Naive thymus-derived CD4-positive, alpha-beta T cell (primary cell): ENCODE measurements at regions of chr20 and their contacts with region 1.

Region 1: GRCh38 chr20:17569616-17570346 is at the start of gene DSTN:
- DNase-seq: peak; percentile 83 to 91 (median 89)
- ATAC-seq: peak; percentile 95
- H3K4me3 ChIP-seq: peak within 1 kb of the TSS; percentile 94
- H3K4me3 Mint-ChIP-seq: peak within 1 kb of the TSS; percentile 82 to 97 (median 95)
- H3K27ac ChIP-seq: peak within 1 kb of the TSS; percentile 85
- H3K27ac Mint-ChIP-seq: peak within 1 kb of the TSS; percentile 80 to 96 (median 91)
- H3K4me1 ChIP-seq: peaks cover 5 to 11% of the 10 kb centered on the region in 2 donors
- H3K4me1 Mint-ChIP-seq: peaks cover 17 to 44% (median 31%) of the 10 kb centered on the region in 7 donors
- H3K27me3 ChIP-seq: no peaks in the 10 kb centered on the region
- H3K27me3 Mint-ChIP-seq: peaks cover 0 to 14% (median 0%) of the 10 kb centered on the region in 5 donors
- total RNA-seq, gene DSTN: 28.7 to 63.6 (median 33.9) TPM

Region 2: GRCh38 chr20:17460119-17460518 is 109.7 kb before region 1 on chr20:
- CTCF ChIA-PET with region 1: no interaction called
- POLR2A ChIA-PET with region 1: no interaction called
- intact Hi-C with region 1: no loop called
- DNase-seq: no peak
- ATAC-seq: no peak
- H3K4me3 ChIP-seq: no peak overlapping the region
- H3K4me3 Mint-ChIP-seq: no peak overlapping the region
- H3K27ac ChIP-seq: no peak overlapping the region
- H3K27ac Mint-ChIP-seq: no peak overlapping the region
- H3K4me1 ChIP-seq: no peaks in the 10 kb centered on the region
- H3K4me1 Mint-ChIP-seq: peaks cover 0 to 6% (median 0%) of the 10 kb centered on the region in 7 donors
- H3K27me3 ChIP-seq: no peaks in the 10 kb centered on the region
- H3K27me3 Mint-ChIP-seq: peaks cover 11 to 30% (median 16%) of the 10 kb centered on the region in 5 donors

Region 3: GRCh38 chr20:17536944-17537444 is 32.8 kb before region 1 on chr20:
- CTCF ChIA-PET with region 1: interaction called, 4 read pairs
- POLR2A ChIA-PET with region 1: no interaction called
- intact Hi-C with region 1: loop called in 1 of 2 experiments (anchors 2 kb)
- DNase-seq: peak; percentile 22 to 73 (median 65)
- ATAC-seq: peak; percentile 98
- H3K4me3 ChIP-seq: no peak overlapping the region
- H3K4me3 Mint-ChIP-seq: no peak overlapping the region
- H3K27ac ChIP-seq: no peak overlapping the region
- H3K27ac Mint-ChIP-seq: peak overlapping the region in 2 of 9 donors; percentile 50 to 52
- H3K4me1 ChIP-seq: peaks cover 0 to under 1% of the 10 kb centered on the region in 2 donors
- H3K4me1 Mint-ChIP-seq: peaks cover 0 to 39% (median 0%) of the 10 kb centered on the region in 7 donors
- H3K27me3 ChIP-seq: no peaks in the 10 kb centered on the region
- H3K27me3 Mint-ChIP-seq: peaks cover 10 to 30% (median 18%) of the 10 kb centered on the region in 5 donors

Region 4: DNA sequence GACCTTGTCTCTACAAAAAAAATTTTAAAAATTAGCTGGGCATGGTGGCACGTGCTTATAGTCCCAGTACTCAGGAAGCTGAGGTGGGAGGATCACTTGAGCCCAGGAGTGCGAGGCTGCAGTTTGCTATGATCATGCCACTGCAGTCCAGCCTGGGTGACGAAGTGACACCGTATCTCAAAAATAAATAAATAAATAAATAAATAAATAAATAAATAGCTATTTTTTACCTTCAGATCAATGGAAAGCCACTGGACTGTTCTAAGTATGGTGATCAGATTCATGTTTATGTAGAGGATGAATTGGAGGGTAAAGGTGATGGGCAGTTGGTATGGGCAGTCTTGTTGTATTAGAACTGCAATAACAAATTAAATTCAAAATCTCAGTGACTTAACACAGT is 24.1 kb after region 1 on chr20:
- CTCF ChIA-PET with region 1: interaction called, 4 read pairs
- POLR2A ChIA-PET with region 1: interaction called, 4 read pairs
- intact Hi-C with region 1: loop called in 1 of 2 experiments (anchors 2 kb)
- DNase-seq: no peak
- ATAC-seq: no peak
- H3K4me3 ChIP-seq: no peak overlapping the region
- H3K4me3 Mint-ChIP-seq: no peak overlapping the region
- H3K27ac ChIP-seq: no peak overlapping the region
- H3K27ac Mint-ChIP-seq: no peak overlapping the region
- H3K4me1 ChIP-seq: no peaks in the 10 kb centered on the region
- H3K4me1 Mint-ChIP-seq: peaks cover 14 to 68% (median 53%) of the 10 kb centered on the region in 7 donors
- H3K27me3 ChIP-seq: no peaks in the 10 kb centered on the region
- H3K27me3 Mint-ChIP-seq: peaks cover 0 to 2% (median 0%) of the 10 kb centered on the region in 5 donors

Region 5: DNA sequence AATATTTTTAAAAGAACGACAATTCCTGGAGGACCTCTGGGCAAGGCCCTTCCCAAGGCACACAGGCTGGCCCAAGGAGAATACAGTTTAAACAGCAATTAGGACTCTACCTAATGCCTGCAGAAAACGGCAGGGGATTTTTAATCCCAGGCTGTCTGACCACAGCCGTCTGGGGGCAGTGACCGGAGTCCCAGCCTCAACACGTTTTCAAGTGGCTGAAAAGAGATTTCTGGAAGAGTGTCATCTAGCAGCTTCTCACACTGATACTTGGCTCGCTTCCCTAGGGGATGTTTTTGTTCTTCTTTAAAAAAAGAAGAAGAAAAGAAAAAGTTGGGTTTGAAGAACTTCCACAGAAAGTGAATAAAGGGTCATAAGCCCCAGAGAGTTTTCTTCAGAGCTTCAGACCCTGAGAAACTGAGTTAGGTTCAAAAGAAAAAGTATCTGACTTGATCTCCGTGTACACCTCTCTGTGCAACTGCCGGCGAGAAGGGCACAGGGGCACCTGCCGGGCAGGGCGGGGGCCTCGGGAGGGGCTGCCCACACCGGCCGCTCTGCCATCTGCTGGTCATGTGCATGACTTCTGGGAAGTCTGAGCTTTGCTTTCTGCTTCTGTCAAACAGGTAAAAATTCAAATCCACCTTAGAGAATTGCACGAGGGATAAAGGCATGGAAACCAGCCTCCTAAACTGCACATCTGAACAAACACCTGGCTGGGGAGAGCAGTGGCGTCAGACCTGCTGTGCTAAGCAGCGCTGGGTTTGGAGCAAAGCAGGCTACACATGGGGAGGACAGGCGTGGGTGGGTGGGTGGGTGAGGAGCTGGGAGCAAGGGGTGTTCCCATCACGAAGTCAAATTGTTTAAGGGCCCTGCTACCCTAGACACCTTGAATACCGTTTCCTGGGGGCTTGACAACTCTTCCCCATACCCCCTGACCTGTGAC is 79.3 kb after region 1 on chr20:
- CTCF ChIA-PET with region 1: interaction called, 3 read pairs
- POLR2A ChIA-PET with region 1: interaction called, 3 read pairs
- intact Hi-C with region 1: loop called in 1 of 2 experiments (anchors 2 kb)
- DNase-seq: peak in 7 of 9 donors; percentile 14 to 54 (median 30)
- ATAC-seq: peak; percentile 67
- H3K4me3 ChIP-seq: no peak overlapping the region
- H3K4me3 Mint-ChIP-seq: peak overlapping the region in 2 of 10 donors; percentile 25 to 28
- H3K27ac ChIP-seq: no peak overlapping the region
- H3K27ac Mint-ChIP-seq: peak overlapping the region in 3 of 9 donors; percentile 67 to 85 (median 72)
- H3K4me1 ChIP-seq: no peaks in the 10 kb centered on the region
- H3K4me1 Mint-ChIP-seq: peaks cover 4 to 15% (median 8%) of the 10 kb centered on the region in 7 donors
- H3K27me3 ChIP-seq: no peaks in the 10 kb centered on the region
- H3K27me3 Mint-ChIP-seq: no peaks in the 10 kb centered on the region